ENCODE measurements at regions of chr4 and their contacts with region 1.

Region 1: GRCh38 chr4:60805500-60806313 is 394.4 kb upstream of the ADGRL3 start:
- DNase-seq: no peak
- H3K4me3 ChIP-seq: no peak overlapping the region
- H3K27ac ChIP-seq: no peak overlapping the region
- H3K4me1 ChIP-seq: no peaks in the 10 kb centered on the region
- H3K27me3 ChIP-seq: no peaks in the 10 kb centered on the region
- CTCF ChIP-seq: peak in 3 of 5 experiments; percentile 35 to 41 (median 38)
- EP300 ChIP-seq: no peak
- POLR2A ChIP-seq: no peak

Region 2: DNA sequence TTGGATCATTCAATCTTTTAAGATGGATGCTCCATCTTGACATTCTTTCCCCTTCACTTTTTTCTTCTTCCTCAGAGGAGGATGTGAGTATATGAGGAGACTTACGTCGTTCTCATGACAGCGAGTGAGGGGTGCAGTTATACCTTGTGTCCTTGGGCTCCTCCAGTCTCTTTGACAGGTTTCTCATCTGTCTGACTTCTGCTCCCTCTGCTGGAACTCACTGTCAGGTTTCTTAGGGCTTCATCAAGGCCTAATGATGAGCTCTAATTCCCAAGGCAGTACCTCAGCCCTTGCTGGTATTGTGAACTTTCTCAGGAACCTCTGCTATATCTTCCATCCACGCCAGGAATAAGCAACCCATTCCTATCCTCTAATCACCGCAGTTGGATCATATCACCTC is 156.6 kb after region 1 on chr4:
- in situ Hi-C with region 1: no loop called
- intact Hi-C with region 1: no loop called
- DNase-seq: no peak
- H3K4me3 ChIP-seq: no peak overlapping the region
- H3K27ac ChIP-seq: no peak overlapping the region
- H3K4me1 ChIP-seq: no peaks in the 10 kb centered on the region
- H3K27me3 ChIP-seq: no peaks in the 10 kb centered on the region
- CTCF ChIP-seq: no peak
- EP300 ChIP-seq: no peak
- POLR2A ChIP-seq: no peak

Region 3: DNA sequence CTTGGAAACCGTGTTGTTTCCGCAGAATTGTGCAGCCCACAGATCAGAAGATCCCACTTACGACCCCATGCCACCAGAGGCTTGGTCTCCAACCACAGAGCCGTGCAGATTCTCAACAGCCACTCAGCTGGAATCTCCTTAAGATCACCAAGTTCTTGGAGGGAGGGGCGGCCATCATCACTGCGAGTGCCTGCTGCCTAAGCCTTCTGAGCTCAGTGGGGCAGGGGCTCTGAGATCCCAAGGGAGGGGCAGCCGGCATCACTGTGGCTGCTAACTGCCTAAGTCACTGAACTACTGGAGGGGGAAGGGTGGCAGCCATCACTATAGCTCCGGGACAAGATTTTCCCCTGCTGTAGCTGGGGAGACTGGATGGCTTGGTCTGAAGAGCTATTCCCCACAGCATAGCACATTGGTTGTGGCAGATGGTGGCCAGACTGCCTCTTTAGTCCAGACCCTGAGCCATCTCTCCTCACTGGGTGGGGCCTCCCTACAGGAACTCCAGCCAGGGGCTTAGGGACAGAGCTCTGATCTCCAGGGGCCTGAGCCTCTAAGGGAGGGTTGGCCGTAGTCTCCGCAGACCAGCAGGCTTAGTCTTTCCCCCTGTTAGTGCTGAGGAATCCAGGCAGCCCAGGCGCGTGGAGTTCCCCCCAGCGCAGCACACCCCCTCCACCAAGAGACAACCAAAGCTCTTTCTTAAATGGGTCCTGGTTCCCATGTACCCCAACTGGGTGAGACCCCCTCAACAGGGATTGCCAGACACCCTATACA is 1878.3 kb after region 1 on chr4:
- in situ Hi-C with region 1: loop called in 1 of 4 experiments (anchors 25 kb)
- intact Hi-C with region 1: no loop called
- DNase-seq: no peak
- H3K4me3 ChIP-seq: no peak overlapping the region
- H3K27ac ChIP-seq: no peak overlapping the region
- H3K4me1 ChIP-seq: no peaks in the 10 kb centered on the region
- H3K27me3 ChIP-seq: no peaks in the 10 kb centered on the region
- CTCF ChIP-seq: no peak
- EP300 ChIP-seq: no peak
- POLR2A ChIP-seq: no peak